AG04449 (cell line): ENCODE measurements at regions of chr16 and their contacts with region 1.

Region 1: DNA sequence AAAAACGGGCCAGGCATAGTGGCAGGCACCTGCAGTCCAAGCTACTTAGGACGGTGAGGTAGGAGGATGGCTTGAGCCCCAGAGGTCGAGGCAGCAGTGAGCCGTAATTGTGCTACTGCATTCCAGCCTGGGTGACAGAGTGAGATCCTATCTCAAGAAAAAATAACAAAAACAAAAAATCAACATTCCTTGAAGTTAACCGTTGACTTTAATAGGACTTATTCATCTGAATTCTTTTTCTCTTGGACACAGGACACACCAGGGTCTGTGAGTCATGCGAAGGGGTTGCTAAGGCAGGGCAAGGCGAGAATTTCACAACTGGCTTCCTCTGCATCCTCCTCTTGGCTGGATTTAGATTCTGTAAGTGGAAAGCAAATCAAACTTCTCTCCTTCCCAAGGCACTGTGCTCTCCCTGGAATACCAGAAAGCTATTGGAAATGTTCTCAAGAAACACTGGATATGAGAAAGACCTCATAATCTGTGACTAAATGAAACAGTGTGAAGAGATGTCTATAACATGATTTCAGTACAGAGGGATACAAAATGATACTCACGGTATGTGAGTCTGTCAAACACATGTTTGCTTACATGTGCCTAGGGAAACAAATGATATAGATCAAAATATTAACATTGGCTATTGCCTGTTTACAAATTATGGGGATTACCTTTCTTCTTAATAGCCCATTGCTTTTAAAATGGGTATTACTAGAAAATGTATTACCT is 99.6 kb downstream of the SYCE1L start:
- DNase-seq: peak; percentile 87
- H3K4me3 ChIP-seq: no peak overlapping the region
- CTCF ChIP-seq: no peak

Region 2: GRCh38 chr16:77288222-77288621 is 10.6 kb before region 1 on chr16:
- CTCF ChIA-PET with region 1: interaction called, 3 read pairs
- POLR2A ChIA-PET with region 1: interaction called, 11 read pairs
- DNase-seq: peak; percentile 73
- H3K4me3 ChIP-seq: no peak overlapping the region
- CTCF ChIP-seq: no peak

Region 3: GRCh38 chr16:77647726-77648125 is 348.9 kb after region 1 on chr16:
- CTCF ChIA-PET with region 1: no interaction called
- POLR2A ChIA-PET with region 1: no interaction called
- DNase-seq: no peak
- H3K4me3 ChIP-seq: no peak overlapping the region
- CTCF ChIP-seq: no peak